ENCODE measurements at regions of chr5 and their contacts with region 1.

Region 1: GRCh38 chr5:113606298-113607134 is 93.0 kb downstream of the YTHDC2 start:
- DNase-seq: peak in 2 of 4 donors; percentile 43 to 56
- ATAC-seq: peak; percentile 92
- H3K4me3 ChIP-seq: no peak overlapping the region
- H3K27ac ChIP-seq: no peak overlapping the region
- H3K4me1 ChIP-seq: no peaks in the 10 kb centered on the region
- H3K27me3 ChIP-seq: peaks cover 6 to 30% of the 10 kb centered on the region in 2 donors
- CTCF ChIP-seq: peak; percentile 68 to 76

Region 2: DNA sequence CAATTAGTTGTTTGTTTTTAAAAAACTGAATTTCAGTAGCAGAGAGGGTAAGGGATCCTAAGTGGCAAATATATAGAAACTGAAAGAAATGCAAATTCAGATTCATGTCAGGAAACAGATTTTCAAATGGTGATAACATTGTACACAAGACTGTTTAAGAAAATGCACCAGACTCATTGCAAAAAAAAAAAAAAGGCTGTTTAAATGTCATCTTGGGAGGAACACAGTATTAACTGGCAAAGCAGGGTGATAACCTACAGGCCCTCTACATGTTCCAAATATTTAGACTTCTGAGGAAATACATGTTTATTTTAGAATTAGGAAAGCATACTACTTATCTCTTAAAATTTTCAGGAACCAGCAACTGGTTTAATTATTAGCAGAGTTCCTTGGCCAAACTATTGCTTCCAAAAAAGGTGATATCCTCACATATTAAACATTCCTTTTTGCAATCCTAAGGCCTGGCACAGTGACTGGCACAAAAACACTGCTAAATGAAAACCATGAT is 286.2 kb before region 1 on chr5:
- intact Hi-C with region 1: no loop called
- DNase-seq: no peak
- ATAC-seq: peak; percentile 51
- H3K4me3 ChIP-seq: no peak overlapping the region
- H3K27ac ChIP-seq: no peak overlapping the region
- H3K4me1 ChIP-seq: peaks cover 0 to 14% of the 10 kb centered on the region in 2 donors
- H3K27me3 ChIP-seq: no peaks in the 10 kb centered on the region
- CTCF ChIP-seq: no peak

Region 3: GRCh38 chr5:113336975-113337374 is 269.5 kb before region 1 on chr5:
- intact Hi-C with region 1: loop called in 1 of 2 experiments (anchors 5 kb)
- DNase-seq: peak in 1 of 4 donors; percentile 28
- ATAC-seq: peak; percentile 76
- H3K4me3 ChIP-seq: no peak overlapping the region
- H3K27ac ChIP-seq: no peak overlapping the region
- H3K4me1 ChIP-seq: no peaks in the 10 kb centered on the region
- H3K27me3 ChIP-seq: no peaks in the 10 kb centered on the region
- CTCF ChIP-seq: peak in 1 of 2 donors; percentile 22